WTC11 (cell line): ENCODE measurements at regions of chr1 and their contacts with region 1.

Region 1: GRCh38 chr1:226223786-226224244 is 351 bp downstream of the MIXL1 start:
- DNase-seq: peak; percentile 69
- ATAC-seq: peak; percentile 52
- H3K4me3 Mint-ChIP-seq: peak overlapping the region; percentile 83
- H3K27ac Mint-ChIP-seq: no peak overlapping the region
- H3K4me1 Mint-ChIP-seq: peaks cover 29% of the 10 kb centered on the region
- H3K27me3 Mint-ChIP-seq: peaks cover 22% of the 10 kb centered on the region
- CTCF ChIP-seq: no peak

Region 2: GRCh38 chr1:226510453-226510852 is 286.6 kb after region 1 on chr1:
- CTCF ChIA-PET with region 1: no interaction called
- POLR2A ChIA-PET with region 1: interaction called, 12 read pairs
- DNase-seq: no peak
- ATAC-seq: no peak
- H3K4me3 Mint-ChIP-seq: no peak overlapping the region
- H3K27ac Mint-ChIP-seq: no peak overlapping the region
- H3K4me1 Mint-ChIP-seq: no peaks in the 10 kb centered on the region
- H3K27me3 Mint-ChIP-seq: peaks cover 27% of the 10 kb centered on the region
- CTCF ChIP-seq: no peak